CD4-positive, alpha-beta memory T cell (primary cell): ENCODE measurements at regions of chr6 and their contacts with region 1.

Region 1: GRCh38 chr6:112163295-112164257 is 76.2 kb downstream of the FAM229B start:
- DNase-seq: peak; percentile 61 to 69 (median 63)
- H3K4me3 ChIP-seq: no peak overlapping the region
- H3K4me3 Mint-ChIP-seq: peak overlapping the region in 7 of 8 donors; percentile 48 to 86 (median 69)
- H3K27ac ChIP-seq: no peak overlapping the region
- H3K27ac Mint-ChIP-seq: peak overlapping the region in 4 of 7 donors; percentile 44 to 74 (median 63)
- H3K4me1 ChIP-seq: peaks cover 8% of the 10 kb centered on the region
- H3K4me1 Mint-ChIP-seq: peaks cover 4 to 17% (median 14%) of the 10 kb centered on the region in 4 donors
- H3K27me3 ChIP-seq: no peaks in the 10 kb centered on the region
- H3K27me3 Mint-ChIP-seq: peaks cover 41 to 43% of the 10 kb centered on the region in 2 donors

Region 2: DNA sequence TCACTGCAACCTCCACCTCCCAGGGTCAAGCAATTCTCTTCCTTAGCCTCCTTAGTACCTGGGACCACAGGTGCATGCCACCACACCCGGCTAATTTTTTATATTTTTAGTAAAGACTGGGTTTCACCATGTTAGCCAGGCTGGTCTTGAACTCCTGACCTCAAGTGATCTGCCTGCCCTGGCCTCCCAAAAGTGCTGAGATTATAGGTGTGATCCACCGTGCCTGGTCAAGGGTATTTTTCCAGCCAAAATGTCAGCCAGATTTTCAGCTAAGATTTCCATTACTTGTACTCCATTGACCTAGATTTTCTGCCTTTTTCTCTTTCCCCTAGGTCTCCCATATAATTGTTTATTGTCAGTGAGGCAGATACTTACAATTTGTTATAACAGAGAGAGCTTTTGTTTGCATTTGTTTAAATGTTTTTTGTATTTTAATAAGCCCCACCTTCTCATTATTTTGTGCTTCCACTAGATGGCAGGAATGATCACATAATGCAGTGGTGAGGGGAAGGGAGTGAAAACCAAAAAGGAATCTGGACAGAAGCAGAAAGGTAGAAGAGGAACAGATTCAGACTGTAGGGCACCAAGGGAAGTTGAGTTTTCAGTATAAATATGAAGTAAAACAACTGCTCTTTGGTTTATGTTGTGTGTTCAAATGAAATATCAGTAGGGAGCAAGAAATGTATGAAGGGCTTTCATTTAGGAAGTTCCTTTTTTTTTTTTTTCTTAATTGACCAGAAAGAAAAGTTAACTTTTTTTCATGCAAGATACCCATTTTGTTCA is 1152.0 kb before region 1 on chr6:
- CTCF ChIA-PET with region 1: interaction called, 16 read pairs
- POLR2A ChIA-PET with region 1: no interaction called
- intact Hi-C with region 1: no loop called
- DNase-seq: peak in 4 of 5 donors; percentile 26 to 43 (median 35)
- H3K4me3 ChIP-seq: no peak overlapping the region
- H3K4me3 Mint-ChIP-seq: no peak overlapping the region
- H3K27ac ChIP-seq: no peak overlapping the region
- H3K27ac Mint-ChIP-seq: peak overlapping the region in 4 of 7 donors; percentile 0 to 17 (median 4)
- H3K4me1 ChIP-seq: no peaks in the 10 kb centered on the region
- H3K4me1 Mint-ChIP-seq: peaks cover 0 to 5% (median 4%) of the 10 kb centered on the region in 4 donors
- H3K27me3 ChIP-seq: no peaks in the 10 kb centered on the region
- H3K27me3 Mint-ChIP-seq: no peaks in the 10 kb centered on the region

Region 3: DNA sequence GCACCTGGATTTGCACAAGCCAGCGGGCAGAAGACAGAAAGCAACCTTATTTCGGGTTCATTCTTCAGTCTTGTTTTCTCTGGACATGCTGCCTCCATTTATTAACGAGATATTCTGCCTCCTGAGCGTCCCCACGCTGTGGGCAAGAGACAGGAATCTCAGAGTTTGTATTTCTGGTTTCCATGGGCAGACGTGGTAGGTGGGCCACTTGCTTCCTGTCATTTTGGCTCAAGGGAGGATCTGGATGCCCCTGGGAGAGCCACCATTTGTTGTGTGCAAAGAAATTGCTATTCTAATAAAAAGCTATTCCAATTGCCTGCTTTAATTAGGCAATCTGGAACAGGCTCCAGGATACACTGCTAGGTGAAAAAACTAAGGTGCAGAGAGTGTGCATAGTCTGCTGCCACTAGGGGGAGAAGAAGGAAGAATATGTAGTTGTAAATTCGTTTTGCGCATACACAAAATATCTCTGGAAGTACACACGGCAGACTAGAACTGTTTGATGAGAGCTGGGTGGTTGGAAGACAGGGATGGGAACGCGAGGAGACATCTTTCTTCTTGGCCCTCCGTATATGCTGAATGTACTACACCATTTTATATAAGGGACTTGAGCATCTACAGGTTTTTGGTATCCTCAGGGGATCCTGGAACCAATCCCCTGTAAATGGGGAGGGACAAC is 1106.4 kb before region 1 on chr6:
- CTCF ChIA-PET with region 1: interaction called, 4 read pairs
- POLR2A ChIA-PET with region 1: no interaction called
- intact Hi-C with region 1: loop called (anchors 2 kb)
- DNase-seq: peak in 4 of 5 donors; percentile 23 to 30 (median 27)
- H3K4me3 ChIP-seq: no peak overlapping the region
- H3K4me3 Mint-ChIP-seq: no peak overlapping the region
- H3K27ac ChIP-seq: no peak overlapping the region
- H3K27ac Mint-ChIP-seq: no peak overlapping the region
- H3K4me1 ChIP-seq: no peaks in the 10 kb centered on the region
- H3K4me1 Mint-ChIP-seq: peaks cover 0 to 5% (median 2%) of the 10 kb centered on the region in 4 donors
- H3K27me3 ChIP-seq: no peaks in the 10 kb centered on the region
- H3K27me3 Mint-ChIP-seq: no peaks in the 10 kb centered on the region

Region 4: DNA sequence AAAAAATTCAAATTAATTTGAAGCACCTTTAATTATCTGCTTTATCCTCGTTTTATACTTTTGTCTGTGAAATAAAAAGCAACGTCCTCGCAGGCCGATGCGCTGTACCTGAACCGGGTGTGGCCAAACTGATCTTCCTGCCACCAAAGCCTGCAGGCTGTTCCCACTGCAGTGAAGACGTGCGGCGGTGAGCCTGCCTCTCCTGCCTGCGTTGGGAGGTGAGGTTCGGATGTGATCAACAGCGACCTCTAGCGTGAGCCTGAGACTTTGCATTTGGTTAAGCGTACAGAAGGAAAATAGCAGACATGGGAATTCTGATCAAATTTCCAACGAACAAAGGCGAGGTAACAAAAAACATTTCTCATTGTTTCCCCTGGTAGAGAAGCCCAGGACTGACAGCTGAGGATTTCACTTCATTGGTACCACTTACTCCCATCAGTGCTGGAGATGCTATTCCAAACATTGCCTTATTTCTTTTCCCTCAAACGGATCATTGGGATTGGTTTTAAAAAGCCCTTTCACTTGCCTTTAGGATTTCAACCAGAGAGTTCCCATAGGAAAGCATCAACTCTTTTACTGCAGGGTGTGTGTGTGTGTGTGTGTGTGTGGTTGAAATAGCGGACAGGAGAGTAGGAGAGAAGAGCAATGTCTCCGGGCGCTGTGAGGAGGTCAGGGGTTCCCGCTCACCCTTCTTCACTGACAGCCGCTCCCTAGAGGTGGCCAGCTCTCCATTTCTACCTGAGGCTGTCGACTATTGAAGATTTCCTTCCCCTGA is 166.3 kb before region 1 on chr6:
- CTCF ChIA-PET with region 1: no interaction called
- POLR2A ChIA-PET with region 1: no interaction called
- intact Hi-C with region 1: no loop called
- DNase-seq: peak; percentile 76 to 79 (median 78)
- H3K4me3 ChIP-seq: peak overlapping the region in 1 of 2 donors; percentile 21
- H3K4me3 Mint-ChIP-seq: peak overlapping the region; percentile 64 to 85 (median 80)
- H3K27ac ChIP-seq: no peak overlapping the region
- H3K27ac Mint-ChIP-seq: peak overlapping the region; percentile 76 to 90 (median 85)
- H3K4me1 ChIP-seq: peaks cover 38% of the 10 kb centered on the region
- H3K4me1 Mint-ChIP-seq: peaks cover 39 to 47% (median 42%) of the 10 kb centered on the region in 4 donors
- H3K27me3 ChIP-seq: no peaks in the 10 kb centered on the region
- H3K27me3 Mint-ChIP-seq: no peaks in the 10 kb centered on the region

Region 5: GRCh38 chr6:112010328-112010727 is 153.2 kb before region 1 on chr6:
- CTCF ChIA-PET with region 1: interaction called, 18 read pairs
- POLR2A ChIA-PET with region 1: no interaction called
- intact Hi-C with region 1: no loop called
- DNase-seq: peak in 4 of 5 donors; percentile 33 to 44 (median 38)
- H3K4me3 ChIP-seq: no peak overlapping the region
- H3K4me3 Mint-ChIP-seq: no peak overlapping the region
- H3K27ac ChIP-seq: no peak overlapping the region
- H3K27ac Mint-ChIP-seq: peak overlapping the region in 3 of 7 donors; percentile 0 to 77 (median 8)
- H3K4me1 ChIP-seq: peaks cover 4% of the 10 kb centered on the region
- H3K4me1 Mint-ChIP-seq: peaks cover 2 to 15% (median 5%) of the 10 kb centered on the region in 4 donors
- H3K27me3 ChIP-seq: no peaks in the 10 kb centered on the region
- H3K27me3 Mint-ChIP-seq: no peaks in the 10 kb centered on the region

Region 6: GRCh38 chr6:112087136-112087911 is 76.3 kb before region 1 on chr6 and contains the starts of genes FAM229B and TUBE1:
- CTCF ChIA-PET with region 1: interaction called, 35 read pairs
- POLR2A ChIA-PET with region 1: interaction called, 10 read pairs
- intact Hi-C with region 1: loop called (anchors 1 kb)
- DNase-seq: peak; percentile 89 to 97 (median 93)
- H3K4me3 ChIP-seq: peak within 1 kb of the TSS; percentile 31 to 80
- H3K4me3 Mint-ChIP-seq: no peak within 1 kb of the TSS
- H3K27ac ChIP-seq: peak within 1 kb of the TSS; percentile 78
- H3K27ac Mint-ChIP-seq: peak within 1 kb of the TSS in 1 of 7 donors; percentile 59
- H3K4me1 ChIP-seq: peaks cover 15% of the 10 kb centered on the region
- H3K4me1 Mint-ChIP-seq: peaks cover 6 to 15% (median 8%) of the 10 kb centered on the region in 4 donors
- H3K27me3 ChIP-seq: peaks cover 15% of the 10 kb centered on the region
- H3K27me3 Mint-ChIP-seq: peaks cover 13 to 17% of the 10 kb centered on the region in 2 donors
- total RNA-seq, gene FAM229B: 1.7 to 1.9 TPM
- total RNA-seq, gene TUBE1: 40.6 to 45.2 TPM

Region 7: GRCh38 chr6:112149719-112150263 is 13.8 kb before region 1 on chr6:
- CTCF ChIA-PET with region 1: interaction called, 16 read pairs
- POLR2A ChIA-PET with region 1: no interaction called
- intact Hi-C with region 1: no loop called
- DNase-seq: no peak
- H3K4me3 ChIP-seq: no peak overlapping the region
- H3K4me3 Mint-ChIP-seq: no peak overlapping the region
- H3K27ac ChIP-seq: no peak overlapping the region
- H3K27ac Mint-ChIP-seq: no peak overlapping the region
- H3K4me1 ChIP-seq: no peaks in the 10 kb centered on the region
- H3K4me1 Mint-ChIP-seq: no peaks in the 10 kb centered on the region
- H3K27me3 ChIP-seq: no peaks in the 10 kb centered on the region
- H3K27me3 Mint-ChIP-seq: peaks cover 9 to 10% of the 10 kb centered on the region in 2 donors